Activated CD8-positive, alpha-beta memory T cell treated with anti-CD3 and anti-CD28 coated beads, Interleukin-2, amount 10 ng/mL, durations not matched to agents 7 days and 5 days (primary cell): ENCODE measurements at regions of chr11 and their contacts with region 1.

Region 1: DNA sequence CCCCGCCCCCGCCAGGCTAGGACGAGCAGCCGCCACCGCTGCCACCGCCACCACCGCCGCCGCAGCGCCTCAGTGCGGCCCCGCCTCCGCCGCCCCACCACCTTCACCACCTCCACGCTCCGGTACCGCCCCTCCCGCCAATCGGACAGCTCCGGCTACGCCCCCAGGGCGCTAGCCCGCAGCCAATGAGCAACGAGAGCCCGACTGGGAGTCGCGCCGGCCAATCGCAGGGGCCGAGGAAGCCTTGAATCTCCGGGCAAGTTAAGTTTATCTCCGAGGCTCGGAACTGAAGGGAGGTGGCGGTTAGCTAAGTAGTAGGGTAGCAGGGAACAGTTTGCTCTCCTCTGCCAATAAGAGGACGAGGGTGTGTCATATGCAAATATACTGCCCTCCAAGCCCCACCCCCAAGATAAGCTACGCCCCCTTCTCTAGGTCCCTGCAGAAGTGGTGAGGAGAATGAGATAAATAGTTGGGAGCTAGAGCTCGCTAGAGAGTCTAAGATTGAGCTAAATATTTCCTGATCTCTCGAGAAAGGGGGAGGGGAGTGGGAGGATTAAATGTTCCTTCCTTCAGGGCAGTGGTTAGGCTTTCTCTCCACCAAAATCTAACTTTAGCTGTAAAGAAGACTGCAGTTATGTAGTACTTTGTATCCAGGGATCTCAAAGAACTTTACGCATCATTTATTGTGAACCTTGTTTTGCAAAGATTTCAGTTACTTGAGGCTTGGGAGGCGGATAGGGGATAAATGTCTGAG is at the start of gene SESN3:
- DNase-seq: peak; percentile 99
- ATAC-seq: peak; percentile 95
- H3K4me3 Mint-ChIP-seq: peak within 1 kb of the TSS; percentile 84
- H3K27ac Mint-ChIP-seq: peak within 1 kb of the TSS; percentile 75
- H3K4me1 Mint-ChIP-seq: peaks cover 24% of the 10 kb centered on the region
- H3K27me3 Mint-ChIP-seq: peaks cover 16% of the 10 kb centered on the region
- total RNA-seq, gene SESN3: 9.3 to 24.3 TPM

Region 2: GRCh38 chr11:95200781-95201457 is 30.4 kb before region 1 on chr11:
- CTCF ChIA-PET with region 1: no interaction called
- DNase-seq: no peak
- ATAC-seq: no peak
- H3K4me3 Mint-ChIP-seq: no peak overlapping the region
- H3K27ac Mint-ChIP-seq: no peak overlapping the region
- H3K4me1 Mint-ChIP-seq: peaks cover 6% of the 10 kb centered on the region
- H3K27me3 Mint-ChIP-seq: no peaks in the 10 kb centered on the region

Region 3: DNA sequence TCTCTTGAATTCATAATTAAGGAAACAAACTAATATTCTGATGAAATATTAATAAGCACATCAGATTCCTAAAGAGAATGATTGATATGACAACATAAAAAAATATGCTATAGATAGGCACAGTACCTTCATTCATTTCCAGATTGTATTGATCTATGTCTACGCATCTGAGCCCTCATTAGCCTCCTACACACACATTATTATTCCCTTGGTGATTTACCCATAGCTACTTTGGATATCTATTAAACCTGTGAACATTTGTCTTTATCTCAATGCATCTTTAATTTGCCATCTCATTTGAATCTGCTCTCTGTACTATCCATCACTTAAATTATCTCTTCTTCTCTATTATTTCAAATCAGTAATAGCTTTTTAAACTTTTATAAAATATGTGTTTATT is 18.7 kb before region 1 on chr11:
- CTCF ChIA-PET with region 1: no interaction called
- DNase-seq: no peak
- ATAC-seq: no peak
- H3K4me3 Mint-ChIP-seq: no peak overlapping the region
- H3K27ac Mint-ChIP-seq: no peak overlapping the region
- H3K4me1 Mint-ChIP-seq: no peaks in the 10 kb centered on the region
- H3K27me3 Mint-ChIP-seq: no peaks in the 10 kb centered on the region

Region 4: GRCh38 chr11:95254131-95254704 is 22.9 kb after region 1 on chr11:
- CTCF ChIA-PET with region 1: interaction called, 17 read pairs
- DNase-seq: peak; percentile 91
- ATAC-seq: peak; percentile 100
- H3K4me3 Mint-ChIP-seq: peak overlapping the region; percentile 74
- H3K27ac Mint-ChIP-seq: peak overlapping the region; percentile 79
- H3K4me1 Mint-ChIP-seq: peaks cover 25% of the 10 kb centered on the region
- H3K27me3 Mint-ChIP-seq: no peaks in the 10 kb centered on the region

Region 5: DNA sequence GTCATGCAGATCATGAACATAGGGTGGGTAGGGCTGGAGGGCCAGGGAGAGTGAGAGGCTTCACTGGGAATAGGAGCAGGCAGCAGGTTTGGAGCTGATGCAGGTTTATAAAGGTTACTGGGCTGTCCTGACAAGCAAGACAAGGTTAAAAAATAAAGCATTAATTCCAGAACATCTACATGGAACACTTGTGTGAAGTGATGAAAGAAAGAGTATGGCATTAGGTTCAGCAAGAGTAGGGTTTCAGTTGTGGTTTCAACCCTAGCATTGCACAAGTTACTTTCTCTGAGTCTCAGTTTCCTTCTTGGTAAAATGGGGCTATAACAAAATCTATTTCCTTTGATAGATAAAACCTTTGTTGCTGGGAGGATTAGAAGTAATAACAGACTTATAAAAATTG is 114.3 kb after region 1 on chr11:
- CTCF ChIA-PET with region 1: no interaction called
- DNase-seq: no peak
- ATAC-seq: no peak
- H3K4me3 Mint-ChIP-seq: no peak overlapping the region
- H3K27ac Mint-ChIP-seq: no peak overlapping the region
- H3K4me1 Mint-ChIP-seq: peaks cover 10% of the 10 kb centered on the region
- H3K27me3 Mint-ChIP-seq: peaks cover 16% of the 10 kb centered on the region